ENCODE measurements at regions of chr16 and their contacts with region 1.

Region 1: DNA sequence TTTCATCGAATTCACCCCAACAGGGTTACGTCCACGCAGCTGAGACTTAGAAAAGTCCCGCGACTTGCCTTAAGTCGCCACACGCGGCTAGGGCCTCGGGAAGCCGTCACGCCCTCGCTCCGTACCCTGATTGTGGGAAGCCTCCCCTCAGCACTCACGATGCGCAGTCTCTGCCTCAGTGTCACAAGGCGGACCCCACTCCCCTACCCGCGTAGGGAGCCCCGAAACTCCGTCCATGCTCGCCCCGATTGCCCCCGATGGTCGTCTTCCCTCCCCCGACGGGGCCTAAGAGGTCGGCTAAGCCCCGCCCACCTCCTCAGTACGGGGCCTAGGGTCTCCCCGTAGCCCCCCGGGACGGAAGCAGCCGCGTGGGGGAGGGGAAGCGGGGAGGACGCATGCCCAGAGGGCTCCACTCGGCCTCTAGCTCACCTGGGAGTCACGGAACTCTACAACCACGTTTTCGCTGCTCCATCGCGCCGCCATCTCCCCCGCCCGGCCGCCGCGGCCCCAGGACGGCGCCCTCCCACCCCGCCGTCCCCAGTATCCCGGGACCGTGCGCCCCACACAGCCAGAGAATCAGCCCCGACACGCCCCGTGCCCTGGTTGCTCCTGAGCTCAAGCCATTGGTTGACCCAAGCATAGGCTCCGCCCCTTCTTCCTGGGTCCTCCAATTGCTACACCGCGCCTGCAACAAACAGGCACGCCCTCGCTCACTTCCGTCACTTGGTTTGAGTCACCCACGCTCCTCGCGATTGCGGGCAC is at the start of gene WDR59:
- DNase-seq: peak; percentile 100
- ATAC-seq: peak; percentile 99
- H3K4me3 ChIP-seq: peak within 1 kb of the TSS; percentile 85 to 99 (median 89)
- H3K27ac ChIP-seq: peak within 1 kb of the TSS; percentile 75
- H3K4me1 ChIP-seq: peaks cover 69% of the 10 kb centered on the region
- H3K27me3 ChIP-seq: no peaks in the 10 kb centered on the region; a peak in 1 of 5 replicates
- CTCF ChIP-seq: peak; percentile 24; the same call in 1 of the 2 replicates
- EP300 ChIP-seq: 0 out of 4 replicates have a peak, but pooled peaks have one; percentile 16 to 63
- POLR2A ChIP-seq: peak; percentile 86 to 90
- RAD21 ChIP-seq: peak; percentile 56; the same call in 1 of the 2 replicates
- total RNA-seq, gene WDR59: 59.6 and 65.2 TPM in 2 replicates

Region 2: GRCh38 chr16:74729783-74730699 is 254.7 kb before region 1 on chr16:
- CTCF ChIA-PET with region 1: no interaction called
- POLR2A ChIA-PET with region 1: no interaction called
- in situ Hi-C with region 1: no loop called
- intact Hi-C with region 1: no loop called
- DNase-seq: no peak
- ATAC-seq: no peak
- H3K4me3 ChIP-seq: no peak overlapping the region; a peak in 1 of 6 replicates
- H3K27ac ChIP-seq: no peak overlapping the region
- H3K4me1 ChIP-seq: peaks cover 56% of the 10 kb centered on the region
- H3K27me3 ChIP-seq: peaks cover 5 to 26% of the 10 kb centered on the region in 2 experiments; a peak in 4 of 5 replicates
- CTCF ChIP-seq: no peak
- EP300 ChIP-seq: no peak
- POLR2A ChIP-seq: no peak
- RAD21 ChIP-seq: no peak

Region 3: GRCh38 chr16:74868501-74868900 is 116.2 kb before region 1 on chr16:
- CTCF ChIA-PET with region 1: no interaction called
- POLR2A ChIA-PET with region 1: no interaction called
- in situ Hi-C with region 1: no loop called
- intact Hi-C with region 1: no loop called
- DNase-seq: peak; percentile 76
- ATAC-seq: peak; percentile 81
- H3K4me3 ChIP-seq: no peak overlapping the region
- H3K27ac ChIP-seq: peak overlapping the region; percentile 35
- H3K4me1 ChIP-seq: peaks cover 40% of the 10 kb centered on the region
- H3K27me3 ChIP-seq: no peaks in the 10 kb centered on the region
- CTCF ChIP-seq: no peak
- EP300 ChIP-seq: peak in 1 of 2 experiments; percentile 41; a peak in 1 of 4 replicates
- POLR2A ChIP-seq: no peak
- RAD21 ChIP-seq: no peak

Region 4: GRCh38 chr16:74892574-74893461 is 91.9 kb before region 1 on chr16:
- CTCF ChIA-PET with region 1: no interaction called
- POLR2A ChIA-PET with region 1: no interaction called
- in situ Hi-C with region 1: no loop called
- intact Hi-C with region 1: no loop called
- DNase-seq: no peak
- ATAC-seq: no peak
- H3K4me3 ChIP-seq: no peak overlapping the region
- H3K27ac ChIP-seq: no peak overlapping the region
- H3K4me1 ChIP-seq: no peaks in the 10 kb centered on the region
- H3K27me3 ChIP-seq: no peaks in the 10 kb centered on the region
- CTCF ChIP-seq: no peak
- EP300 ChIP-seq: no peak
- POLR2A ChIP-seq: no peak
- RAD21 ChIP-seq: no peak

Region 5: GRCh38 chr16:74973153-74973703 is 11.5 kb before region 1 on chr16:
- CTCF ChIA-PET with region 1: no interaction called
- POLR2A ChIA-PET with region 1: interaction called, 14 read pairs
- in situ Hi-C with region 1: no loop called
- intact Hi-C with region 1: no loop called
- DNase-seq: no peak
- ATAC-seq: peak; percentile 27; the same call in 1 of the 3 replicates
- H3K4me3 ChIP-seq: no peak overlapping the region
- H3K27ac ChIP-seq: no peak overlapping the region
- H3K4me1 ChIP-seq: no peaks in the 10 kb centered on the region
- H3K27me3 ChIP-seq: no peaks in the 10 kb centered on the region
- CTCF ChIP-seq: no peak
- EP300 ChIP-seq: no peak
- POLR2A ChIP-seq: no peak
- RAD21 ChIP-seq: no peak

Measured in HepG2 (cell line).